ENCODE measurements at regions of chr14 and their contacts with region 1.

Region 1: DNA sequence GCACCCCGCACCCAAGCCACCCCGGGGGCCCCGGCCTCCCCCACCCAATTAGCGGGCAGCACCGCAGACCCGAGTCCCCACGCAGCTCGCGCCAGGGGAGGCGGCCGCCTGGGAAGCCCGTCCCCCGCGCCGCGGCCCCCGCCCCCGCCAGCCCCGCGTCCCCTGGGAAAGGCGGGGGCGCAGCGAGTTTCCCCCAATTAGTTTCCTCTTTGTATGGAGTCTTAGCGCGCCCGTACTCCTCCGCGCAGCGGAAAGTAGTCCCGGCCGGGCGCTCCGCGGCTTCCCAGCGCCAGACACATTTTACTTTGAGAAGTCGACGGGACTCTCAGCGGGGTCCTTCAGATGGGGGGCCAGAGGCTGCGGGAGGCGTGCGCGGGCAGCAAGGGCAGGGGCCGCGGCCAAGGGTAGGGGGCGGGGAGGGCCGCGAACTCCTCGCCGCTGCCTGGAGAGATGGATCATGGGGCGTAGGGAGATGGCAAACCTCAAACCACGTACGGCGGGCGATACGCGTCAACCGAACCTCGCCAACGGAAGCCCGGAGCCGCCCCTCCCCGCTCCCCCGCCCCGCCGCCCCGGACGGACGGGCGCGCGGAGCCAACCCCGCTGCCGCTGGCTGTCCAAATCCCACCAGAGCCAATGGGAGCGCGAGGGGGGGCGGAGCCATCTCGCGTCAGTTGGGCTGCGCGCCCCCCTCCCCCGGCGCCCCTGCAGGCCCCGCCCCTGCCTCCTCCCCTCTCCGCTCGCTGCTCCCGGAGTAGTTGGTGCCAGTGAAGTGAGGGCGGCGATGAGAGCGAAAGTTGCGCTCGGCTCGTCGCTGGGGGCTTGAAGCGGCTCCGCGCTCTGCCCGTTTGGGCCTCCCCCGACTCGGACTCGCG is at the start of gene RCOR1:
- DNase-seq: peak; percentile 97

Region 2: GRCh38 chr14:102451061-102451350 is 141.1 kb before region 1 on chr14:
- CTCF ChIA-PET with region 1: no interaction called
- POLR2A ChIA-PET with region 1: no interaction called
- DNase-seq: no peak

Region 3: GRCh38 chr14:102524466-102525218 is 67.5 kb before region 1 on chr14:
- CTCF ChIA-PET with region 1: interaction called, 5 read pairs
- POLR2A ChIA-PET with region 1: interaction called, 12 read pairs
- DNase-seq: peak; percentile 99

Region 4: DNA sequence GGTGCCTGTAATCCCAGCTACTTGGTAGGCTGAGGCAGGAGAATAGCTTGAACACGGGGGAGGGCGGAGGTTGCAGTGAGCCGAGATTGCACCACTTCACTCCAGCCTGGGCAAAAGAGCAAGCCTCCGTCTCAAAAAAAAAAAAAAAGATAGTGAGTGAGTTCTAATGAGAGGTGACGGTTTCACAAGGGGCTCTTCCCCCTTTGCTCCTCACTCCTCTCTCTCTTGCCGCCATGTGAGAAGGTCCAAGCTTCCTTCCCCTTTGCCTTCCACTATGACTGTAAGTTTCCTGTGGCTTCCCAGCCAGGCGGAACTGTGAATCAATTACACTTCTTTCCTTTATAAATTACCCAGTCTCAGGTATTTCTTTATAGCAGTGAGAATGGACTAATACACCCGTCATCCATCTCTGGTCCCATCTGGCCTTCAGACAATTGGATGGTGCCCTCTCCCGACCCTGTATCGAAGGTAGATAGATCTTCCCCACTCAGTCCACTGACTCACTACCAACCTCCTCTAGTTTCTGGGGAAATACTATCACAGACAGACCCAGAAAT is 26.7 kb before region 1 on chr14:
- CTCF ChIA-PET with region 1: no interaction called
- POLR2A ChIA-PET with region 1: no interaction called
- DNase-seq: no peak

Region 5: GRCh38 chr14:102606296-102606695 is 14.2 kb after region 1 on chr14:
- CTCF ChIA-PET with region 1: interaction called, 11 read pairs
- POLR2A ChIA-PET with region 1: no interaction called
- DNase-seq: no peak

Region 6: DNA sequence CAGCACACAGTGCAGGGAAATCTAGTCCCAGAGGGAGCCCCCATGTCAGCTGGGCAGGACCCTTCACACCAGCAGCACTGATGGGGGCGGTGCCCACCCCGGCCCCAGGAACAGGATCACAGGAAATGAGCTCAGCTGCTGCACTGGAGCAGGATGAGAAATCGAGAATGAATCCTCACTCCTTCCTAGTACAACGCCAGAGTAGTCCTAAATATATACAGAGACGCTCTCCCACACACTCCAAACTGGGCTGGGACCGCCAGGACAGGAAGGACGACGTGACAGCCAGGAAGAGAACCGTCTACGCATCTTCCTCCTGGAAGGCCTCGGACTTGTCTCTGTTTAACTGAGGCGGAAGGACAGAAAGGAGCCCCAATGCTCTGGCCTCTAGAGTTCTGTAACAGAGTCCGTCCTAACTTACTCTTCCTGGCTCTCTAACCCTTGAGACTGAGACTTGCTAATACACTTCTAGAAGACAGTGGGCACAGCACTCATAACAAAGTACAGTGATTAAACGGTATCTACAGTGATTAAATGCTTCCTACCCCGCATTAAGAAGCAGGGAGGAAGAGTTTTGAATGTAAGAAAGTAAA is 431.9 kb after region 1 on chr14:
- CTCF ChIA-PET with region 1: no interaction called
- POLR2A ChIA-PET with region 1: no interaction called
- DNase-seq: no peak

Measured in HEK293T (cell line).